Activated B cell treated with CpG ODN at 0.5 μM for 24 hours (primary cell): ENCODE measurements at regions of chr19 and their contacts with region 1.

Region 1: GRCh38 chr19:51108066-51108804 is at the start of gene CTU1:
- DNase-seq: peak; percentile 93
- ATAC-seq: peak; percentile 97
- H3K4me3 Mint-ChIP-seq: peak within 1 kb of the TSS; percentile 93
- H3K27ac Mint-ChIP-seq: peak within 1 kb of the TSS; percentile 96
- H3K4me1 Mint-ChIP-seq: peaks cover 29% of the 10 kb centered on the region
- H3K27me3 Mint-ChIP-seq: peaks cover 2% of the 10 kb centered on the region
- CTCF ChIP-seq: no peak
- total RNA-seq, gene CTU1: 7.8 and 8.9 TPM in 2 replicates

Region 2: GRCh38 chr19:51016798-51017683 is 91.2 kb before region 1 on chr19:
- CTCF ChIA-PET with region 1: no interaction called
- POLR2A ChIA-PET with region 1: no interaction called
- intact Hi-C with region 1: no loop called
- DNase-seq: peak; percentile 21
- ATAC-seq: no peak
- H3K4me3 Mint-ChIP-seq: no peak overlapping the region
- H3K27ac Mint-ChIP-seq: no peak overlapping the region
- H3K4me1 Mint-ChIP-seq: peaks cover 10% of the 10 kb centered on the region
- H3K27me3 Mint-ChIP-seq: peaks cover 52% of the 10 kb centered on the region
- CTCF ChIP-seq: no peak

Region 3: GRCh38 chr19:51142119-51142518 is 33.9 kb after region 1 on chr19 and contains the start of gene SIGLEC7:
- CTCF ChIA-PET with region 1: no interaction called
- POLR2A ChIA-PET with region 1: no interaction called
- intact Hi-C with region 1: no loop called
- DNase-seq: no peak
- ATAC-seq: no peak
- H3K4me3 Mint-ChIP-seq: no peak within 1 kb of the TSS
- H3K27ac Mint-ChIP-seq: no peak within 1 kb of the TSS
- H3K4me1 Mint-ChIP-seq: peaks cover 19% of the 10 kb centered on the region
- H3K27me3 Mint-ChIP-seq: peaks cover 46% of the 10 kb centered on the region
- CTCF ChIP-seq: no peak
- total RNA-seq, gene SIGLEC7: not detected in 2 replicates

Region 4: GRCh38 chr19:51593969-51594773 is 485.9 kb after region 1 on chr19:
- CTCF ChIA-PET with region 1: no interaction called
- POLR2A ChIA-PET with region 1: no interaction called
- intact Hi-C with region 1: loop called (anchors 1 kb)
- DNase-seq: peak; percentile 93
- ATAC-seq: peak; percentile 100
- H3K4me3 Mint-ChIP-seq: peak overlapping the region; percentile 96
- H3K27ac Mint-ChIP-seq: peak overlapping the region; percentile 90
- H3K4me1 Mint-ChIP-seq: peaks cover 27% of the 10 kb centered on the region
- H3K27me3 Mint-ChIP-seq: no peaks in the 10 kb centered on the region
- CTCF ChIP-seq: no peak